ENCODE measurements at regions of chr2 and their contacts with region 1.

Region 1: DNA sequence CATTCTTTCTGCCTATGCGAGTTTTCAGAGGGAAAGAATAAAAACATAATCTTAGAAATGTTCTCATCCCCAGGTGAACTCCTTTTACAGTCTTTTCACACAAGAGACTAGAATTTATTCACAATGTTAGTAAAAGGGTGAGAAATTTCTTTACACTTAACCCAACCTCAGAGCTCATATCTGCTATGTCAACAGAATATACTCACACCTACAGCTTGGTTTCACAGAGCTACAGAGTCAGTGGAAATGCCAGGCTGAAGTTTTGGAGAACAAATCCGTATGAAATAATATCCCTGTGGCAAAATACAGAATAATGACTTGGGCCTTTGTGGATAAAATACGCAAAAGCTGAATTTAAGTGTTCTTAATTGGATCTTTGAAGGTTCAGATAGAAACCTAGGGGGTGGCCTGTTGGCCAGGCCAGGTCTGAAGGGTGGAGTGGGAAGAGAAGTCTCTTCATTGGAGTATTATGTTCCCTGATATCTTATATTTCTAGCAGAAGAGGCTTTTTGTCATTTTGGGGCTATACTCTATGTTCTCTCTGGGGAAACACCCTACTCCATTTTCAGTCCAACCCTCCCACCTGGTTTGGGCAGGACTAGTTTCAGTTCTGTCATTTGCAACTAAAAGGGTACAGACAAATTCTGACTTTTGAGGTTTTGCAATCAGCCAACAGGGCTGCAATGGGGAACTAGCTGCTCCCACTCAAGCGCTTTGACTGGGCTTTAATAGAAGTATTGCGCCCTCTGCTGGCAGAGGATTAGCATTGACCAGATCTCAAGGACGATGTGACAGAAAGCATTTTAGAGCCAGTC is 25.7 kb downstream of the FBXO48 start:
- DNase-seq: peak; percentile 89

Region 2: DNA sequence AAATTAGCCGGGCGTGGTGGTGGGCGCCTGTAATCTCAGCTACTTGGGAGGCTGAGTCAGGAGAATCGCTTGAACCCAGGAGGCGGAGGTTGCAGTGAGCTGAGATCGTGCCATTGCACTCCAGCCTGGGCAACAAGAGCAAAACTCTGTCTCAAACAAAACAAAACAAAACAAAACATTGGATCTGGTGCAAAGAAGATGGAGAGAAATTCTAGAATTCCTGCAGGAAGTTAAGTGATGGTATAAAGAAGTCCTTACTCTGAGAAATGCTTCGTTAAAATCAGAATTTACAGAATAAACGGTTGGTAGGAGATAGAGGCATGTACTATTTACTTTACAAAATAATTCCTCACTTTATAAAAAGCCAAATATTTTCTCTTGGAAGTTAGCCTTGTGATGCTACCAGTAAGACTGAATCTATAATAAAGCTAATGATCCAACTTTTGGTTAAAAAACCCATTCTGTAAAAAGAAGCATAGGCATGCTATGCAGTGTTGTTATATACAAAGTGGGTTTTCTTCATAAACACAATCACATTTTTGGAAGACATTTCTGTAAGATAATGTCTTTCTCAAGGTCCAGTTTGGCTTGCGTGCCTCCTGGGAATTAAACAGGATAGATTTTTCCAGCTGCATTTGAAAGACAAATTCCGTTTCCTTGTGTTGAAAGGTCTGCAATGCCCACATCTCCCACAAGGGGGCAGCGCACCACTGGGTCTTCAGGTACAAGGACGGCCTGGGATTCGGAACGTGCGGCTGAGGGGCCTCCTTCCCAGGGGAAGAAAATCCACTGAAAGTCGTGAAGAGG is 319.3 kb before region 1 on chr2:
- intact Hi-C with region 1: loop called in 1 of 2 experiments (anchors 10 kb)
- DNase-seq: peak; percentile 95

Region 3: DNA sequence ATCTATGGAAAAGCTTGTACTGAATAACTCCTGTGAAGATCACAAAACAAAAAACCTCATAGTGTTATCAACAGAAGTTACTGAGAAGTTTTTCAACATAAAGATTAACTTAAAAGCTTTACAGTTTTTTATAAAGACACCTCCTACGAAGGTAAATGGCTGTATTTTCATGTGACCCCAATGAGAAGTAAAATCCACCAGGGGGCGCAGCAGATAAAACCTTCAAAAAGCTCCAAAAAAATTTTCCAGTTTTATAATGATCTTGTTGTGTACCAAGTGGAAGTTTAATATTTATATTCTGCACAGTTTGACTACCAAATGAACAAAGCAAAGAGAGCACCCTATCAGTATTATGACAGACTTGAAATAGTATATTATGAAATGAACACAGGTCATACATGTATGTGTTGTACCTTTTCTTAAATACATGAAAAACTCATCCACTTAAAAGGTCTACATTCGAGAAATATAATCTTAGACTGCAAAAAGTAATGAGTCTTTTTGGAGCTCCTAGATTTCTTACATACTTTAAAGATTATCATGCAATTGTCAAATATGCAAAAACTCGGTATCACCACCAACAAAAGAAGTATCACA is 245.2 kb before region 1 on chr2:
- intact Hi-C with region 1: loop called in 1 of 2 experiments (anchors 10 kb)
- DNase-seq: no peak

Measured in posterior vena cava (tissue), 2 donors.